MCF 10A (cell line): ENCODE measurements at regions of chr13 and their contacts with region 1.

Region 1: GRCh38 chr13:98977568-98978265 is at the start of gene DOCK9:
- DNase-seq: peak; percentile 49
- H3K4me3 Mint-ChIP-seq: peak within 1 kb of the TSS; percentile 70
- H3K27ac Mint-ChIP-seq: peak within 1 kb of the TSS; percentile 80
- H3K4me1 Mint-ChIP-seq: peaks cover 39% of the 10 kb centered on the region
- H3K27me3 Mint-ChIP-seq: no peaks in the 10 kb centered on the region
- CTCF ChIP-seq: no peak
- total RNA-seq, gene DOCK9: 77.0 and 94.1 TPM in 2 replicates

Region 2: DNA sequence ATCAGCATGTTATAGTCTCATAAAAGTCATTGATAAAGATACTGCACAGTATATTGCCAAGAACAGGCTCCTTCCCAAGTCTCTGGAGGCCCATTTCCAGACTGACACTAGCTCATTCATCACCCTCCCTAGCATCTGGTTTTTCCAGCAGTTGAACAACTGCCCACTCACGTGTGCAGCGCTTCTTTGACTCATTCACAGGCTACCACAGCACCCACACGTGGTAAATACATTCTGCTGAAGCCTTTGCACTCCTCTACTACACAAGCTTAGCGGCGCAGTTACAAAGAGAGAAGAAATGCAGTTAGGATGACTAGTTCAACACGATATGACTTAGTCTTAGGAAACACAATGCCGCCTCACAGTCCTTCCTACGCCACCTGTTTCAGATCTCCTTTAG is 87.5 kb before region 1 on chr13:
- CTCF ChIA-PET with region 1: no interaction called
- POLR2A ChIA-PET with region 1: no interaction called
- intact Hi-C with region 1: loop called (anchors 5 kb)
- DNase-seq: peak; percentile 85
- H3K4me3 Mint-ChIP-seq: no peak overlapping the region
- H3K27ac Mint-ChIP-seq: peak overlapping the region; percentile 71
- H3K4me1 Mint-ChIP-seq: peaks cover 19% of the 10 kb centered on the region
- H3K27me3 Mint-ChIP-seq: no peaks in the 10 kb centered on the region
- CTCF ChIP-seq: no peak

Region 3: GRCh38 chr13:98947925-98948324 is 29.8 kb before region 1 on chr13:
- CTCF ChIA-PET with region 1: no interaction called
- POLR2A ChIA-PET with region 1: no interaction called
- intact Hi-C with region 1: no loop called
- DNase-seq: no peak
- H3K4me3 Mint-ChIP-seq: no peak overlapping the region
- H3K27ac Mint-ChIP-seq: no peak overlapping the region
- H3K4me1 Mint-ChIP-seq: peaks cover 13% of the 10 kb centered on the region
- H3K27me3 Mint-ChIP-seq: no peaks in the 10 kb centered on the region
- CTCF ChIP-seq: no peak

Region 4: GRCh38 chr13:98988780-98989179 is 11.1 kb after region 1 on chr13:
- CTCF ChIA-PET with region 1: interaction called, 3 read pairs
- POLR2A ChIA-PET with region 1: interaction called, 12 read pairs
- intact Hi-C with region 1: no loop called
- DNase-seq: peak; percentile 19
- H3K4me3 Mint-ChIP-seq: peak overlapping the region; percentile 60
- H3K27ac Mint-ChIP-seq: peak overlapping the region; percentile 89
- H3K4me1 Mint-ChIP-seq: peaks cover 25% of the 10 kb centered on the region
- H3K27me3 Mint-ChIP-seq: no peaks in the 10 kb centered on the region
- CTCF ChIP-seq: no peak

Region 5: DNA sequence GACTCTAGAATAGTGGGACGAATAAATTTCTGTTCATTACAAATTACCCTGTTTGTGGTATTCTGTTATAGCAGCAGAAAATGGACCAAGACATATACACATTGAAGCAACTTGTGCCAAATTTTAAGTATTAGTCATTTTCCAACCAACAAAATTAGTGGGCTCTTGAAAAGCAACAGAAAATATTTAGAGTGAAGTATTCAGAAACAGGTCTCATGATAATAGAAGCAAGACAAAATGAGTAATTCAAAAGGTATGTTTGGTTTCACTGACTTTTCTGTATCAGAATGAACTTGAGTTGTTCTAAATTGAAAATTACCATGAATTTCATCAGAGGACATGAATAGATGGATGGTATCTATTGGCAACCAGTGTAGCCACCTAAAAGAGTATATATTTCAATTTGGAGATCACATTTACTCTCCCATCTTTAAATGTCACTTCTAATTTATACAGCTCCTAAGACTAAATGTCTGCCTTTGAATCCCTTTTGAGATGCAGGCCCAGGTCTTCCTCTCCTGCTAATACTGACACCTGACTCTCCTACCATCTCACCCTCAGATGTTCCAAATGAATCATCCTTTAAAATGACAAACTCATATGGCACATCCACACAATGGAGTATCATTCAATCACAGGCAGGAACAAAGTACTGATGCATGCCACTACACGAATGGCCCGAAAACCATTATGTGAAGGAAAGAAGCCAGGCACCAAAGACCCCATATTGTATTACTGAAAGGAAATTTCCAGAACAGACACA is 40.9 kb after region 1 on chr13:
- CTCF ChIA-PET with region 1: interaction called, 3 read pairs
- POLR2A ChIA-PET with region 1: interaction called, 4 read pairs
- intact Hi-C with region 1: loop called (anchors 2 kb)
- DNase-seq: no peak
- H3K4me3 Mint-ChIP-seq: no peak overlapping the region
- H3K27ac Mint-ChIP-seq: peak overlapping the region; percentile 78
- H3K4me1 Mint-ChIP-seq: peaks cover 38% of the 10 kb centered on the region
- H3K27me3 Mint-ChIP-seq: no peaks in the 10 kb centered on the region
- CTCF ChIP-seq: no peak

Region 6: DNA sequence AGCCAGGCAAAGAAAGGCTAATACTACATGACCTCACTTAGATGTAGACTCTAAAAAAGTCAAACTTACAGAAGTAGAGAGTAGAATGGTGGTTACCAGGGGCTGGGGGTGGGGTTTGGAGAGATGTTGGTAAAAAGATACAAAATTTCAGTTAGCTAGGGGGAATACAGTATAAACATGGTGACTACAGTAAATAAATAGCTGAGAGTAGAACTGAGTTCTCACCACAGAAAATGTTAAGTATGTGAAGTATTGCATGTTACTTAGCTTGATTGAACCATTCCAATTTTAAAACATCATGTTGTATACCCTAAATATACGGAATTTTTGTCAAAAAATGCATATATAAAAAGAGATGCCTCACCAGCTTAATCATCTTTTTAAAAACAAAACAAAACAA is 67.7 kb after region 1 on chr13:
- CTCF ChIA-PET with region 1: no interaction called
- POLR2A ChIA-PET with region 1: interaction called, 12 read pairs
- intact Hi-C with region 1: no loop called
- DNase-seq: no peak
- H3K4me3 Mint-ChIP-seq: peak overlapping the region; percentile 13
- H3K27ac Mint-ChIP-seq: peak overlapping the region; percentile 90
- H3K4me1 Mint-ChIP-seq: peaks cover 45% of the 10 kb centered on the region
- H3K27me3 Mint-ChIP-seq: no peaks in the 10 kb centered on the region
- CTCF ChIP-seq: no peak